ENCODE measurements at regions of chr6 and their contacts with region 1.

Region 1: GRCh38 chr6:36123257-36124139 is 6.8 kb upstream of the MAPK13 start:
- DNase-seq: peak; percentile 87
- ATAC-seq: peak; percentile 83
- H3K4me3 Mint-ChIP-seq: peak overlapping the region; percentile 43
- H3K27ac Mint-ChIP-seq: peak overlapping the region; percentile 85
- H3K4me1 Mint-ChIP-seq: peaks cover 63% of the 10 kb centered on the region
- H3K27me3 Mint-ChIP-seq: no peaks in the 10 kb centered on the region

Region 2: GRCh38 chr6:36027501-36028087 is 95.9 kb before region 1 on chr6 and contains the start of gene MAPK14:
- POLR2A ChIA-PET with region 1: interaction called, 47 read pairs
- DNase-seq: peak; percentile 96
- ATAC-seq: peak; percentile 89
- H3K4me3 Mint-ChIP-seq: peak within 1 kb of the TSS; percentile 94
- H3K27ac Mint-ChIP-seq: peak within 1 kb of the TSS; percentile 94
- H3K4me1 Mint-ChIP-seq: peaks cover 30% of the 10 kb centered on the region
- H3K27me3 Mint-ChIP-seq: peaks cover 24% of the 10 kb centered on the region
- total RNA-seq, gene MAPK14: 57.3 to 62.2 TPM

Region 3: DNA sequence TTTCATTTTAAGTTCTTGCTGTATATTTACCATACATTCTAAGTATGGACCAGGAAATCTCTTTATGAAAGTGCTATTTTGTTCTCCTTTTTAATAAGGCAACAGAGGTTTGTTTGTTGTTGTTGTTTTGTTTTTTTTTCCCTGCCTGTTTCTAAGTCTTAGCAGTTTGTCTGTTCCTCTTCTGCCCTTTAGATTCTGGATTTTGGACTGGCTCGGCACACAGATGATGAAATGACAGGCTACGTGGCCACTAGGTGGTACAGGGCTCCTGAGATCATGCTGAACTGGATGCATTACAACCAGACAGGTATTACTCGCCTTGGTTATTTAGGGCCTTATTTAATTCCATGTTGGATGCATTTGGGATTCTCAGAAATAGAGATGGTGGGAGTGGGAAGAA is 47.8 kb before region 1 on chr6:
- POLR2A ChIA-PET with region 1: no interaction called
- DNase-seq: no peak
- ATAC-seq: no peak
- H3K4me3 Mint-ChIP-seq: no peak overlapping the region
- H3K27ac Mint-ChIP-seq: no peak overlapping the region
- H3K4me1 Mint-ChIP-seq: peaks cover under 1% of the 10 kb centered on the region
- H3K27me3 Mint-ChIP-seq: no peaks in the 10 kb centered on the region

Region 4: GRCh38 chr6:36099872-36100483 is 23.5 kb before region 1 on chr6:
- POLR2A ChIA-PET with region 1: interaction called, 16 read pairs
- DNase-seq: no peak
- ATAC-seq: peak; percentile 78
- H3K4me3 Mint-ChIP-seq: peak overlapping the region; percentile 17
- H3K27ac Mint-ChIP-seq: peak overlapping the region; percentile 64
- H3K4me1 Mint-ChIP-seq: peaks cover 24% of the 10 kb centered on the region
- H3K27me3 Mint-ChIP-seq: no peaks in the 10 kb centered on the region

Region 5: DNA sequence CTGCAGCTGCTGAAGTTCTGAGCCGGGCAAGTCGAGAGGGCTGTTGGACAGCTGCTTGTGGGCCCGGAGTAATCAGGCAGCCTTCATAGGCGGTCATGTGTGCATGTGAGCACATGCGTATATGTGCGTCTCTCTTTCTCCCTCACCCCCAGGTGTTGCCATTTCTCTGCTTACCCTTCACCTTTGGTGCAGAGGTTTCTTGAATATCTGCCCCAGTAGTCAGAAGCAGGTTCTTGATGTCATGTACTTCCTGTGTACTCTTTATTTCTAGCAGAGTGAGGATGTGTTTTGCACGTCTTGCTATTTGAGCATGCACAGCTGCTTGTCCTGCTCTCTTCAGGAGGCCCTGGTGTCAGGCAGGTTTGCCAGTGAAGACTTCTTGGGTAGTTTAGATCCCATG is 14.4 kb before region 1 on chr6:
- POLR2A ChIA-PET with region 1: interaction called, 28 read pairs
- DNase-seq: no peak
- ATAC-seq: peak; percentile 95
- H3K4me3 Mint-ChIP-seq: peak overlapping the region; percentile 50
- H3K27ac Mint-ChIP-seq: peak overlapping the region; percentile 77
- H3K4me1 Mint-ChIP-seq: peaks cover 33% of the 10 kb centered on the region
- H3K27me3 Mint-ChIP-seq: no peaks in the 10 kb centered on the region

Region 6: DNA sequence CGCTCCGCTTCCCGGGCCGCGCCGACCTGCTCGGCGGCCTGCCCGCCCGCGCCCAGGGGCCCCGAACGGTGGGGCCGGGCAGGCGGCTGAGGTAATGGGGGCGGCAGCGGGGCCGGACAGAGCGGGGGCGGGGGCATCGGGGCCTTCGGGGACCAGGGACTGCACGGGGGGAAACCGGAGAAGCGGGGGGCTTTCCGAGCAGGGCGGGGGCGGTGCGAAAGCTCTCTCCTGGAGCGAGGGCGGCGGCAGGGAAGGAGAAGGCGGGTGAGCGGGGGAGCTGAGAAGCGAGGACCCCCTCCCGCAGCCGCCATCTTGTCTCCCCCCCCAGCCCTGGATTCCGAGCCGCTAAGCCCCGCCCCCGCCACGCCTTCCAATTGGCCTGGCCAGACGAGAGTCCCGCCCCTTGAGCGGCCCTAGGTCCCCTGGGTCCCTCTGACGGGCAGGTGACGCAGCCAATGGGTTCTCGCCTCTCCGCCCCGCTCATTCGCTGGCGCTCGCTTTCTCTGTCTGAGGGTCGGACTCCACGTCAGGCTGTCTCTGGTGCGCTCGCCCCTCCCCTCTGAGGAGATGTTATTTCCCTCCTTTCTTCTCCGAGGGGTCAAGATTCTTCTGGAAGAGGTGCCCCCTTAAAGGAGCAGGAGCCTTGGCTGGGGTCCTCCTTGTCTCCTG is 73.5 kb after region 1 on chr6:
- POLR2A ChIA-PET with region 1: interaction called, 23 read pairs
- DNase-seq: peak; percentile 100
- ATAC-seq: peak; percentile 96
- H3K4me3 Mint-ChIP-seq: peak overlapping the region; percentile 89
- H3K27ac Mint-ChIP-seq: peak overlapping the region; percentile 90
- H3K4me1 Mint-ChIP-seq: peaks cover 23% of the 10 kb centered on the region
- H3K27me3 Mint-ChIP-seq: no peaks in the 10 kb centered on the region

Region 7: GRCh38 chr6:36204068-36204753 is 80.7 kb after region 1 on chr6:
- POLR2A ChIA-PET with region 1: interaction called, 13 read pairs
- DNase-seq: peak; percentile 72
- ATAC-seq: peak; percentile 80
- H3K4me3 Mint-ChIP-seq: peak overlapping the region; percentile 69
- H3K27ac Mint-ChIP-seq: peak overlapping the region; percentile 57
- H3K4me1 Mint-ChIP-seq: peaks cover 39% of the 10 kb centered on the region
- H3K27me3 Mint-ChIP-seq: peaks cover 10% of the 10 kb centered on the region